Mammary epithelial cell (primary cell): ENCODE measurements at regions of chr4 and their contacts with region 1.

Region 1: GRCh38 chr4:54217642-54218495 is 11.2 kb upstream of the PDGFRA start:
- DNase-seq: peak; percentile 82
- H3K4me3 ChIP-seq: peak overlapping the region; percentile 23 to 52 (median 34)
- H3K27ac ChIP-seq: peak overlapping the region; percentile 22
- H3K4me1 ChIP-seq: no peaks in the 10 kb centered on the region
- H3K27me3 ChIP-seq: no peaks in the 10 kb centered on the region
- CTCF ChIP-seq: peak; percentile 73 to 92

Region 2: DNA sequence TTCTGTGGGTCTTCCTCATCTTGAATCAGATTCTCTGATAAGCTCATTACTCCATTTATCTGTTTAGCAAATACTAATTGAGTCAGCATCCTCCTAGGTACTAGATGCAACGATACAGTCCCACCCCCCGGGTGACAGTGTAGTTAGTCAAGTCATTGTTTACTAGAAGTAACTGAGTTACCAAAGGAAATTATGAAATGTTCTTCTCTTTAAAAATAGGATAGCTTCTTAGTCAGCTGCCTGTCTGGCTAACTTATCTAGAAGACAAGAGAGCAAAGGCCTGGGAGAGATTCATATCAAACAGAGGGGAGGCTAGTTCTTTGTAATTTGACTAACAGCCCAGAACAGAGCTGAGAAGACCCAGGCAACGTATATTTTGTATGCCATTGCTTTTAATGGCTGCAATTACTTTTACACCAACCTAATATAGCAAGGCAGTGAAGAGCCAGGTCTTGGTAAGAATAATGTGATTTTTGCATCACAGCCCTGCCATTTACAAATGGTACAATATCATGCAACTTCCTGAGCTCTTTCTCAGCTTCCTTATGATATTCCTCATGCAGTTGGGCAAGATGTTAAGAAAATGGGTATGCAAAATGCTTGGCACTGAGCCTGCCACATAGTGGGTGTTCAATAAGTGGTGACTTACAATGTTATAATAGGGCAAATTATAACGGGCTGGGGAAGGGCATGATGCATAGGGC is 303.4 kb before region 1 on chr4:
- CTCF ChIA-PET with region 1: no interaction called
- dilution Hi-C with region 1: loop called (anchors 5 kb)
- in situ Hi-C with region 1: loop called in 1 of 2 experiments (anchors 5 kb)
- intact Hi-C with region 1: no loop called
- DNase-seq: peak; percentile 97
- H3K4me3 ChIP-seq: no peak overlapping the region
- H3K27ac ChIP-seq: peak overlapping the region; percentile 99
- H3K4me1 ChIP-seq: peaks cover 69% of the 10 kb centered on the region
- H3K27me3 ChIP-seq: no peaks in the 10 kb centered on the region
- CTCF ChIP-seq: no peak

Region 3: DNA sequence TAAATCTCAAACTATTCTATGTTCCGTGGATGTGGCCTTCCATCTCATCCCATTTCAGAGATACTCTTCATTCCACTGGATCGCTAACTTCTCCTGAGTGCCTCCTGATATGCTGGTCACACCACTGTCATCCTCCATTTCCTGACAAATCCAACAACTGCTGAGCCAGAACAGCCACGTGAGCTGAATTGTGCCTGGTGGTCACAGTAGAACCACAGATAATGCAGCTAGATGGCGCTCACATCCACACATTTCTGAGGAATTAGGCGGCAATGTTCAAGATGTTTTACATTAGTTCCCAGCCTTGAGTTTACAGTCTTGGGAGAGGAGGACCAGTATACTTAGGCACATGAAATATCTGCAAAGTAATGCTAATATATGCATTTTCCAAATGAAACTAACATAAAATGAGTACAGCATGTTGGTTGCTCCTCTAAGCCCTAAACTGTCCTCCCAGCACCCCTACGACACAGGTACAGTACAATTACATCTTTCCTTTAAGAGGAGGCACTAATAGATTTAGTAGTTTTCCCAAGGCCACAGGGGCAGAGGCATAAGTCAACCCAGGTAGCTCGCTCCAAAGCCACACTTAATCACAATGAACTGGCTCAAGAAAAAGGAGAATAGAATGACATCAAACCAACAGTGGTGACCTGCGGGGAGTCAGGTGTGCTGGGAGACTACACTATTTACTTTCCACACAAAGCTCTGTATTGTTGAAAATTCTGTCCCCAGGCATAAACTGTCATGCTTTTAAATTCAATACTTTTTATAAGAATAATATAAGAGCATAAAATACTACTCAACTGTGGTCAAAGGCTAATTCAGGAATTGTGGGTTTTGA is 287.7 kb before region 1 on chr4:
- CTCF ChIA-PET with region 1: no interaction called
- dilution Hi-C with region 1: no loop called
- in situ Hi-C with region 1: no loop called
- intact Hi-C with region 1: loop called (anchors 1 kb)
- DNase-seq: peak; percentile 73
- H3K4me3 ChIP-seq: no peak overlapping the region
- H3K27ac ChIP-seq: no peak overlapping the region
- H3K4me1 ChIP-seq: peaks cover 28% of the 10 kb centered on the region
- H3K27me3 ChIP-seq: no peaks in the 10 kb centered on the region
- CTCF ChIP-seq: peak; percentile 75 to 89

Region 4: GRCh38 chr4:53987761-53988171 is 230.1 kb before region 1 on chr4:
- CTCF ChIA-PET with region 1: no interaction called
- dilution Hi-C with region 1: no loop called
- in situ Hi-C with region 1: no loop called
- intact Hi-C with region 1: loop called (anchors 5 kb)
- DNase-seq: peak; percentile 88
- H3K4me3 ChIP-seq: no peak overlapping the region
- H3K27ac ChIP-seq: peak overlapping the region; percentile 30
- H3K4me1 ChIP-seq: peaks cover 34% of the 10 kb centered on the region
- H3K27me3 ChIP-seq: no peaks in the 10 kb centered on the region
- CTCF ChIP-seq: no peak

Region 5: GRCh38 chr4:54015423-54016030 is 202.3 kb before region 1 on chr4:
- CTCF ChIA-PET with region 1: no interaction called
- dilution Hi-C with region 1: no loop called
- in situ Hi-C with region 1: no loop called
- intact Hi-C with region 1: loop called (anchors 5 kb)
- DNase-seq: no peak
- H3K4me3 ChIP-seq: no peak overlapping the region
- H3K27ac ChIP-seq: no peak overlapping the region
- H3K4me1 ChIP-seq: peaks cover 3% of the 10 kb centered on the region
- H3K27me3 ChIP-seq: no peaks in the 10 kb centered on the region
- CTCF ChIP-seq: no peak

Region 6: DNA sequence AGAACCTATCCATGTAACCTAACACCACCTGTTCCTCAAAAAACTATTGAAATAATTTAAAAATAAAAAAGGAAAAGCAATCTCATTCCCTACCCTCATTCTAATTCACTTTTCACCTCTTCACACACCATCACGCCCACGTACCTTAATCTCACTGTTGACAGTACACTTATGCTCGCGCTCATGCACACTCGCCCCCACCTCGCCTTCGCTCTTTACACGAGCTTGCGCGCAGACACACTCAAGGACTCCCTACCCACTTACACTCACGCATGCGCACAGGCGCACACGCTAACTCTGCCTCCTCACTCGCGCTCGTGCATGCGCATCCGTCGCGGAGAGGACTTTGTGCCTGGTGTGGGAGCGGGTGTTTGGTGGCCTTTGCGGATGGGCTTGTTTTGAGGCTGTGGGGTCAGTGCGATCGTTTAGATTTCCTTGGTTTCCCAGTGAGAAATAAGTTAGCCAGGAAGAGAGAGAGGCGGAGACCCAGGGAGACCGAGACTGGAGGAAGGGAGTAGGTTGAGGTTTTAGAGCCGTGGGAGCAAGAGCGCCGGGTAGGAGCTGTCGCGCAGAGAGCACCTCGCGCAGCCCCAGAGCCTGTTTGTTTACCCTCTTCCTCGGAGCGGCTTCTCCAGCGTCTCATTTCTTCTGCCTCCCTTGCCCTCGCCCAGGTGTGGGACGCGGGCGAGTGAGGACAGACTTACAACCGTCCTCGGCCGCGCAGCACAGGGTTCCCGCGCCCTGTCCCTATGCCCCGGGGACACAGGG is 126.0 kb before region 1 on chr4:
- CTCF ChIA-PET with region 1: no interaction called
- dilution Hi-C with region 1: no loop called
- in situ Hi-C with region 1: no loop called
- intact Hi-C with region 1: loop called (anchors 5 kb)
- DNase-seq: peak; percentile 53
- H3K4me3 ChIP-seq: peak overlapping the region; percentile 38 to 68 (median 57)
- H3K27ac ChIP-seq: no peak overlapping the region
- H3K4me1 ChIP-seq: peaks cover 18% of the 10 kb centered on the region
- H3K27me3 ChIP-seq: no peaks in the 10 kb centered on the region
- CTCF ChIP-seq: no peak

Region 7: DNA sequence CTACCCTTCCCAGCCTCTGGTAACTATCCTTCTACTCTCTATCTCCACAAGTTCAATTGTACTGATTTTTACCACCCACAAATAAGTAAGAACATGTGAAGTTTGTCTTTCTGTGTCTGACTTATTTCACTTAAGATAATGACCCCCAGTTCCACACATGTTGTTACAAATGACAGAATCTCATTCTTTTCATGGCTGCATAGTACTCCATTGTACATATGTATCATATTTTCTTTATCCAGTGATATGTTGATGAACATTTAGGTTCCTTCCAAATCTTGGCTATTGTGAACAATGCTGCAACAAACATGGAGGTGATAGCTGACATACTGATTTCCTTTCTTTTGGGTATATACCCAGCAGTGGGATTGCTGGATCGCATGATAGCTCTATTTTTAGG is 90.2 kb before region 1 on chr4:
- CTCF ChIA-PET with region 1: no interaction called
- dilution Hi-C with region 1: loop called (anchors 5 kb)
- in situ Hi-C with region 1: no loop called
- intact Hi-C with region 1: no loop called
- DNase-seq: no peak
- H3K4me3 ChIP-seq: no peak overlapping the region
- H3K27ac ChIP-seq: no peak overlapping the region
- H3K4me1 ChIP-seq: no peaks in the 10 kb centered on the region
- H3K27me3 ChIP-seq: no peaks in the 10 kb centered on the region
- CTCF ChIP-seq: no peak

Region 8: GRCh38 chr4:54741202-54741601 is 523.3 kb after region 1 on chr4:
- CTCF ChIA-PET with region 1: no interaction called
- dilution Hi-C with region 1: no loop called
- in situ Hi-C with region 1: no loop called
- intact Hi-C with region 1: no loop called
- DNase-seq: no peak
- H3K4me3 ChIP-seq: no peak overlapping the region
- H3K27ac ChIP-seq: no peak overlapping the region
- H3K4me1 ChIP-seq: peaks cover 13% of the 10 kb centered on the region
- H3K27me3 ChIP-seq: no peaks in the 10 kb centered on the region
- CTCF ChIP-seq: no peak